MCF 10A (cell line): ENCODE measurements at regions of chr1 and their contacts with region 1.

Region 1: GRCh38 chr1:35192853-35193664 is at the start of gene SFPQ:
- DNase-seq: peak; percentile 99
- H3K4me3 Mint-ChIP-seq: peak within 1 kb of the TSS; percentile 85
- H3K27ac Mint-ChIP-seq: peak within 1 kb of the TSS; percentile 96
- H3K4me1 Mint-ChIP-seq: peaks cover 28% of the 10 kb centered on the region
- H3K27me3 Mint-ChIP-seq: no peaks in the 10 kb centered on the region
- CTCF ChIP-seq: no peak
- total RNA-seq, gene SFPQ: 275 and 314 TPM in 2 replicates

Region 2: GRCh38 chr1:35079003-35079930 is 113.8 kb before region 1 on chr1 and contains the start of gene ZMYM1:
- CTCF ChIA-PET with region 1: no interaction called
- POLR2A ChIA-PET with region 1: interaction called, 10 read pairs
- intact Hi-C with region 1: no loop called
- DNase-seq: peak; percentile 82
- H3K4me3 Mint-ChIP-seq: peak within 1 kb of the TSS; percentile 98
- H3K27ac Mint-ChIP-seq: peak within 1 kb of the TSS; percentile 98
- H3K4me1 Mint-ChIP-seq: peaks cover 17% of the 10 kb centered on the region
- H3K27me3 Mint-ChIP-seq: no peaks in the 10 kb centered on the region
- CTCF ChIP-seq: no peak
- total RNA-seq, gene ZMYM1: 19.2 and 21.2 TPM in 2 replicates

Region 3: GRCh38 chr1:35136780-35137179 is 56.3 kb before region 1 on chr1:
- CTCF ChIA-PET with region 1: no interaction called
- POLR2A ChIA-PET with region 1: no interaction called
- intact Hi-C with region 1: no loop called
- DNase-seq: no peak
- H3K4me3 Mint-ChIP-seq: no peak overlapping the region
- H3K27ac Mint-ChIP-seq: no peak overlapping the region
- H3K4me1 Mint-ChIP-seq: no peaks in the 10 kb centered on the region
- H3K27me3 Mint-ChIP-seq: peaks cover 16% of the 10 kb centered on the region
- CTCF ChIP-seq: no peak

Region 4: DNA sequence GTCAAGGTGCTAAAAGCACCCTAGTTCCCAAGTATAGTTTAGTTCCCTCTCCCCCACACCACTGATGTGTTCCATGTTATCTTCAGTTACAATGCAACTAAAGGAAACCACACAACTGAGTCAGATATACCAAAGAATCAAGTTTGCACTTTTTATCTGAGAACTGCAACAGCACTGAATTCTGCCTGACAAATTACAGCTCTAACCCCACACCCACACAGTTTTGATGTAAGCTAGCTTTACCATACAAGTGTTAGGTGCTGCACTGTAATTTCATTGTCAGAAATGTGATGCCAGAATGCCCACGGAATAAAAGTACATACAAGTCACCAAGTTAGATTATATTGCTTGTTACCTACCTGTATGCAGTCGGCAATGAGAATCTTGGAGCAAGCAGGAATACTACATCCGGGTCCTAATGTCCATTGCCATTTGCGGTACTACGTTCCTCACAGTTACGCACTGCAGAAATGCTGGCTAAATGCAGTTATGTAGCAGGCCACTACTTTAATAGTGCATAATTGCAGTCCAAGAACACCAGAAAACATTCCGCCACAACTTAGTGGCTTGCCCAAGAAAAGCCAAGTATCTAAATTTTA is 12.2 kb before region 1 on chr1:
- CTCF ChIA-PET with region 1: interaction called, 4 read pairs
- POLR2A ChIA-PET with region 1: interaction called, 10 read pairs
- intact Hi-C with region 1: no loop called
- DNase-seq: no peak
- H3K4me3 Mint-ChIP-seq: no peak overlapping the region
- H3K27ac Mint-ChIP-seq: no peak overlapping the region
- H3K4me1 Mint-ChIP-seq: peaks cover 31% of the 10 kb centered on the region
- H3K27me3 Mint-ChIP-seq: no peaks in the 10 kb centered on the region
- CTCF ChIP-seq: no peak

Region 5: GRCh38 chr1:35390600-35391494 is 197.8 kb after region 1 on chr1:
- CTCF ChIA-PET with region 1: no interaction called
- POLR2A ChIA-PET with region 1: no interaction called
- intact Hi-C with region 1: loop called (anchors 10 kb)
- DNase-seq: no peak
- H3K4me3 Mint-ChIP-seq: no peak overlapping the region
- H3K27ac Mint-ChIP-seq: no peak overlapping the region
- H3K4me1 Mint-ChIP-seq: no peaks in the 10 kb centered on the region
- H3K27me3 Mint-ChIP-seq: no peaks in the 10 kb centered on the region
- CTCF ChIP-seq: no peak